ENCODE measurements at regions of chr9 and their contacts with region 1.

Region 1: GRCh38 chr9:118170032-118170955 is 466.1 kb downstream of the TLR4 start:
- DNase-seq: peak; percentile 51 to 58
- H3K4me3 ChIP-seq: no peak overlapping the region
- H3K4me3 Mint-ChIP-seq: no peak overlapping the region
- H3K27ac Mint-ChIP-seq: no peak overlapping the region
- H3K4me1 ChIP-seq: no peaks in the 10 kb centered on the region
- H3K4me1 Mint-ChIP-seq: no peaks in the 10 kb centered on the region
- H3K27me3 ChIP-seq: no peaks in the 10 kb centered on the region
- H3K27me3 Mint-ChIP-seq: peaks cover 3% of the 10 kb centered on the region
- CTCF ChIP-seq: peak; percentile 67 to 76

Region 2: DNA sequence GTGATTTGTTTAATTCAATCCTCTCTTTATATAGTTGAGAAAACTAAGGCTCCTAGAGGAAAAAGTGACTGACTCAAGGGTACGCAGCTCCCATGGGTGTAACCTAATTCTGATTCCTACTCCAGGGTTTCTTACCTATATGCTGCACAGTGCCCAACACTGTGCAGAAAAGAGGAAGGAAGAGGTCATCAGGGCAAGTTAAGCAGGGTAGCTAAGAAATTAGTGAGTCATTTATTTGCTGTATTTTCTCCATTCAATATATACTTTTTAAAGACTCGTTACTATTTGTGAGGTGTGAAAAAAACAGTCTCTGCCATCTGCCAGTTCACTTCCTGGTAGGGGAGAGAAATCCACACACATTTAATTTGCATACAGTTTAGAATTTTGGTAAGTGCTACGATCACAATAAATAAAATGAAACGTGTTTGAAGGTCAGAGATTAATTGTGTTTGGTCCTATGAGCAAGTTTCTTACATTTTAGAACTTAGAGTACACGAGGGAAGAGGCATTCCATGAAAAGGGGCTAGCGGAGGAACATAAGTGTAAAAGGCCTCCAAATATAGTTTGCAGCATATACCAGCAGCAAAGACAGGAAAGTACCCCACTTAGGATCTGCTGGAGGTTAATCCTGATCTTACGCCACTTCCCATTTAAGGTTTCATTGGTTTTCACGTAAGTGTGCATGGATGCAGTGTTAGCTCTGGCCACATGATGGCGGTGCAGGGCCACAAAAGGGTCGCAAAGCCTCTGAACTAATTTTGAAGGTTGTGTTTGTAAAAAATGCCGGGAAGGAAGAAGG is 526.0 kb before region 1 on chr9:
- CTCF ChIA-PET with region 1: no interaction called
- POLR2A ChIA-PET with region 1: no interaction called
- intact Hi-C with region 1: loop called (anchors 1 kb)
- DNase-seq: peak; percentile 57 to 67
- H3K4me3 ChIP-seq: no peak overlapping the region
- H3K4me3 Mint-ChIP-seq: no peak overlapping the region
- H3K27ac Mint-ChIP-seq: no peak overlapping the region
- H3K4me1 ChIP-seq: no peaks in the 10 kb centered on the region
- H3K4me1 Mint-ChIP-seq: no peaks in the 10 kb centered on the region
- H3K27me3 ChIP-seq: no peaks in the 10 kb centered on the region; the same call in 1 of the 2 replicates
- H3K27me3 Mint-ChIP-seq: peaks cover 9% of the 10 kb centered on the region
- CTCF ChIP-seq: peak; percentile 91 to 93

Region 3: DNA sequence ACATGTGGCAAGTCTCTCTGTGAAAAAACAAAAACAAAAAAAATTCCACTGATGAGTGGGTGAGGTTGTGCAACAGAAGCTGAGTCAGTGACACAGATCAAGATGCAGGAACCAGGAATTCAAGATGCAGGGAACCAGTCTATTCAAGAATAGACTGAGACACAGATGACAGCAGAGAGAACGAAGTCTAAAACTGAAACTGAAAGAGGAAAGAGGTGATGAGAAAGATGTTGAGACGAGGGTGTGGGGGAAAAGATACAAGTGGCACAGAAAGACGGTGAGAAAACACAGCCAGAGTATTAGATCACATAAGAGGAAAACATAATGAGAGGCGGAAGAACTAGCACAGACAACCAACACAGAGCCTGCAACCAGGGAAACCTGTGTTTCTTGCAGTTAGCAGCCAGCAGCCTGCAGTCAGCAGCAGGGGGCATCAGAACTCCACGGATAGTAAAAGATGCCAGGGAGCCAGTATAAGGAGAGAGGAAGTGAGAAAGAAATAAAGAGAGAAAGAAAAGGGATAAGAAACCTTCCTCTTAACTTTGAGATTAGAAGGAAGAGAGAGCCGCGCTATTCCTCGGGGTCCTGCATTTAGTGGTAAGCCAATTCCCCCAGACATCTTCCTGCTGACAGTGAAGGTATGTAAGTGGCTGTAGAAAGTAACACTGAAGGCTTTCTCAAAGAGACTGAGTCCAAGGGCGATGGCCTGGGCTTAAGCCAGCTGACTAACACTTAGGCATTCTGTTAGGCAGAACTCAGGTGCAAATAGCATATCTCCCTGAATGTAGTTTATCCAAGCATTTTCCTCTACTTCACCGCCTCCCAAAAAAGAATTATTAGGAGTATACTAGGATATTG is 387.1 kb before region 1 on chr9:
- CTCF ChIA-PET with region 1: no interaction called
- POLR2A ChIA-PET with region 1: no interaction called
- intact Hi-C with region 1: loop called (anchors 1 kb)
- DNase-seq: peak; percentile 59 to 66
- H3K4me3 ChIP-seq: no peak overlapping the region
- H3K4me3 Mint-ChIP-seq: no peak overlapping the region
- H3K27ac Mint-ChIP-seq: no peak overlapping the region
- H3K4me1 ChIP-seq: no peaks in the 10 kb centered on the region
- H3K4me1 Mint-ChIP-seq: no peaks in the 10 kb centered on the region
- H3K27me3 ChIP-seq: no peaks in the 10 kb centered on the region
- H3K27me3 Mint-ChIP-seq: no peaks in the 10 kb centered on the region
- CTCF ChIP-seq: peak; percentile 66 to 76

Region 4: DNA sequence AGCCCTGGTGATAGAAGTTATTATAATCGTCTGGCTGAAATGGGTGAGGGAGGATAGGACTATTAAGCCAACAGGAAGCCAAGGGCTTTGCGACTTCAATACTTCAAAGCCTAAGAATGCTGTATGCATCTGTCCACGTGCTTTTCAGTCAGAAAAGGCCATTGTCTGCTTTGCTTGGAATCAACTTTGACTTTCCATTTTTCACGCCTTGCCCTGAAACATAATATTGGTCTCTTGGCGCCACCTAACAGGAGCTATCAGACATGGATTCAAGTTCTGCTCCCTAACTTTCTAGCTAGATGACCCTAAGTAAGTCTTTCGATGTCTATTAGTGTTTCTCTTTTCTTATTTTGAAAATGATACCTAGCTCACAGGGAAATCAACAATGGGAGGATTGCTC is 106.5 kb after region 1 on chr9:
- CTCF ChIA-PET with region 1: no interaction called
- POLR2A ChIA-PET with region 1: no interaction called
- intact Hi-C with region 1: loop called (anchors 5 kb)
- DNase-seq: no peak
- H3K4me3 ChIP-seq: no peak overlapping the region
- H3K4me3 Mint-ChIP-seq: no peak overlapping the region
- H3K27ac Mint-ChIP-seq: no peak overlapping the region
- H3K4me1 ChIP-seq: no peaks in the 10 kb centered on the region
- H3K4me1 Mint-ChIP-seq: no peaks in the 10 kb centered on the region
- H3K27me3 ChIP-seq: no peaks in the 10 kb centered on the region
- H3K27me3 Mint-ChIP-seq: peaks cover 7% of the 10 kb centered on the region
- CTCF ChIP-seq: no peak

Region 5: DNA sequence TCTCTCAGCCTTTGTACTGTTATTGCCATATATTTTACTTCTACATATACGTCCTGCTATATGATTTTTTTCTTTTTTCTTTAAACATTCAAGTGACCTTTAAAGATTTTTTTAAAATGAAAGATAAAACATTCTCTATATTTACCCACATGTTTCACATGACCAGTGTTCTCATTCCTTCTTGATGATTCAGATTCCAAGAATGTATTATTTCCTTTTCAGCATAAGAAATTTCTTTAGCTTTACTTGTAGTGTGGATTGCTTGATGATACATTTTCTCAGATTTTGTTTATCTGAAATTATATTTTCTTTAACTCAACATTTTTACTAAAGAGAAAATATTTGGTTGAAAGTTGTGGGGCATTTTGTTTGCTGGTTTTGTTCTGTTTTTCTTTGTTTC is 406.8 kb after region 1 on chr9:
- CTCF ChIA-PET with region 1: no interaction called
- POLR2A ChIA-PET with region 1: no interaction called
- intact Hi-C with region 1: no loop called
- DNase-seq: no peak
- H3K4me3 ChIP-seq: no peak overlapping the region
- H3K4me3 Mint-ChIP-seq: no peak overlapping the region
- H3K27ac Mint-ChIP-seq: no peak overlapping the region
- H3K4me1 ChIP-seq: no peaks in the 10 kb centered on the region
- H3K4me1 Mint-ChIP-seq: no peaks in the 10 kb centered on the region
- H3K27me3 ChIP-seq: no peaks in the 10 kb centered on the region
- H3K27me3 Mint-ChIP-seq: no peaks in the 10 kb centered on the region
- CTCF ChIP-seq: no peak

Region 6: DNA sequence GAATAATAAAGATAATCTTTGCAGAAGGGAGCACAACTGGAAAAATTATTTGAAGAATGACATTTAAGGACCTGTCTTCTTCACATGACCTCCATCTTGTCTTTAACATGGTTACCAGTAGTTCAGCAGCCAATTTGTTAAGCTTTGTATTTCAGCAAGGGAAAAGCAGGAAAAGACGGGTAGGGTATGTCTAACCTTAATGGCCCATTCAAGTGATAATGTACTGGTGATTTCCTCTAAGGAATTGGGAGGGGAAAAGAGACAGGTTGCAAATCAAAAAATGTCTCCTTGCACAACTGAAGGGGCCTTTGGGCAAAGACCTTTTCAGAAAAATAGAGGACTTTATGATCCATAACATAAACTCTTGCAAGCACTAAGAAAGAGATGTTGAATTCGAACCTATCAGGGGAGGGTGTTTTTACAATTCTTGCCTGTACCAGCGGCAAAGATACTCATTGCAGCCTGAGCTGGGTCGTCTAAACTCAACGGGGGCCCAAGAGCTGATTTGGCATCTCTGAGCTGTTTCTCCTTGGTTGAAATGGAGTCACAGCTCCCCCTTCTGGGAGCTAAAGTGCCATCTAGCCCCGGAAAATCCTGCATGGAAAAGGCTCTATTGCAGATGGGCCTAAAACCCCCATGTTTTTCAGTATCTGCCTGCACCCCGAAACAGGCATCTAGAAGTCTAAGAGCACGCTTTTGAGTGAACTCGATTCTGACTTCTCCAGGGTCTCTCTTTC is 1195.2 kb after region 1 on chr9:
- CTCF ChIA-PET with region 1: no interaction called
- POLR2A ChIA-PET with region 1: no interaction called
- intact Hi-C with region 1: loop called (anchors 5 kb)
- DNase-seq: peak; percentile 38 to 40
- H3K4me3 ChIP-seq: no peak overlapping the region
- H3K4me3 Mint-ChIP-seq: no peak overlapping the region
- H3K27ac Mint-ChIP-seq: no peak overlapping the region
- H3K4me1 ChIP-seq: no peaks in the 10 kb centered on the region
- H3K4me1 Mint-ChIP-seq: no peaks in the 10 kb centered on the region
- H3K27me3 ChIP-seq: no peaks in the 10 kb centered on the region
- H3K27me3 Mint-ChIP-seq: peaks cover 10% of the 10 kb centered on the region
- CTCF ChIP-seq: peak; percentile 43 to 52

Measured in Caco-2 (cell line).